ENCODE measurements at regions of chr1 and their contacts with region 1.

Region 1: DNA sequence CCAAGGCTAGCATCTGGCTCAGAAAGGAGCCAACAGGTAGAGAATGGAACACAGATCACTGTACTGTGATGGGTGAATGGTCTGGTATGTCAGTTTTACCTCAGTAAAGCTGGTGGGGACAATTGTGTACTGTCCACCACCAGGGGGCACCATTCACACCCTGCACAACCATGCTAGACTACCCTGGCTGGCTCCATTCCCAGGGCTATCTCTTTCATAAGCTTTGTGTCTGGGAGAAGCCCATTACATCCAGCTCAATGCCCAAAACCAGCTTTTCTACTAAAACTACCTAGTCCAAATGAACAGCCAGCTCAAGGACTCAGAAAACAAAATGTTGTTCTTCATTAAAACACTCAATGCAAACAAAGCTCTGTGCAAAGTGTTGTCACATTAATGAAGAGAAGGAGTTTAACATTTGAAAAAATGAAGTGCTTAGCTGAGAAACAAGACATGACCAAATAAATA is 62.0 kb upstream of the RASAL2 start:
- DNase-seq: no peak
- ATAC-seq: peak; percentile 100
- H3K4me3 ChIP-seq: no peak overlapping the region
- H3K27ac ChIP-seq: no peak overlapping the region
- H3K4me1 ChIP-seq: no peaks in the 10 kb centered on the region
- H3K27me3 ChIP-seq: no peaks in the 10 kb centered on the region; a peak in 1 of 4 replicates
- CTCF ChIP-seq: peak; percentile 74 to 82 (median 75)
- EP300 ChIP-seq: no peak
- POLR2A ChIP-seq: no peak
- RAD21 ChIP-seq: peak; percentile 72

Region 2: DNA sequence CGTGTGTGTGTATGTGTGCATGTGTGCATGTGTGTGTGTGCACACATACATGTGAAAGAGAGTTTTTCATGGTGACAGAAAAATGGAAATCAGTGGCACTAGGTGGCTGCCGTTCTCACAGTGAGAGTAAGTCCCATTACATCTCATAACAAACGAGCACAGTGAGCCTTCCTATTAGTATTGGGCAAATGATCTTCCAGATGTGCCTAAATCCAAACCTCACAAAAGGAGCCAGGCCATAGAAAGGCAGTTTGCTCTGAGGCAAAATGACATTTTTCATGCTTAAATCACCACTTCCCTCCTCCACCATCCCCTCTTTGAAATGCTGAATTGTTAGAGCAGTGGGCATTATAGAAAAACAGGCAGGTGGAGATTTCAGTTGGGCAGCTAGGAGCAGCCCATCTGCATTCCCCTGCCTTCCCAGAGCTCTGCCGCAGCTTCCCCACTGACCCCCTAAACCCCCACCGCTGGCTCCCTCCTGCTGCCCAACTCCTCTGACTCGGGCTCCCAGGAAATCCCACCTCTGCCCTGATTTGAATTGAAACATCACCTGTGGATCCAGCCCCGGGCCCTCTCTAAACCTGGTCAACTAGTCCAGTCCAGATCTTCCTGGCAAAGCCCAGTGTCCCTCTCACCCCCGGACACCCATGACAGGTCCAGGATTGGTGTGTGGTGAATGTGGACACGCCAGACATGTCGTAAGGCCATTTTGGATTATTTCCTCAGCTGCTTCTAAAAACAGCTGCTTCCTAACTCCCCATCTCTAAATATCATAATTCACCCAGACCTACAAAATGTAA is 252.5 kb before region 1 on chr1:
- CTCF ChIA-PET with region 1: no interaction called
- POLR2A ChIA-PET with region 1: no interaction called
- RAD21 ChIA-PET with region 1: no interaction called
- SMC1A ChIA-PET with region 1: no interaction called
- in situ Hi-C with region 1: no loop called
- intact Hi-C with region 1: no loop called
- DNase-seq: no peak
- ATAC-seq: no peak
- H3K4me3 ChIP-seq: no peak overlapping the region
- H3K27ac ChIP-seq: no peak overlapping the region
- H3K4me1 ChIP-seq: no peaks in the 10 kb centered on the region
- H3K27me3 ChIP-seq: no peaks in the 10 kb centered on the region
- CTCF ChIP-seq: no peak
- EP300 ChIP-seq: no peak
- POLR2A ChIP-seq: no peak
- RAD21 ChIP-seq: no peak

Region 3: DNA sequence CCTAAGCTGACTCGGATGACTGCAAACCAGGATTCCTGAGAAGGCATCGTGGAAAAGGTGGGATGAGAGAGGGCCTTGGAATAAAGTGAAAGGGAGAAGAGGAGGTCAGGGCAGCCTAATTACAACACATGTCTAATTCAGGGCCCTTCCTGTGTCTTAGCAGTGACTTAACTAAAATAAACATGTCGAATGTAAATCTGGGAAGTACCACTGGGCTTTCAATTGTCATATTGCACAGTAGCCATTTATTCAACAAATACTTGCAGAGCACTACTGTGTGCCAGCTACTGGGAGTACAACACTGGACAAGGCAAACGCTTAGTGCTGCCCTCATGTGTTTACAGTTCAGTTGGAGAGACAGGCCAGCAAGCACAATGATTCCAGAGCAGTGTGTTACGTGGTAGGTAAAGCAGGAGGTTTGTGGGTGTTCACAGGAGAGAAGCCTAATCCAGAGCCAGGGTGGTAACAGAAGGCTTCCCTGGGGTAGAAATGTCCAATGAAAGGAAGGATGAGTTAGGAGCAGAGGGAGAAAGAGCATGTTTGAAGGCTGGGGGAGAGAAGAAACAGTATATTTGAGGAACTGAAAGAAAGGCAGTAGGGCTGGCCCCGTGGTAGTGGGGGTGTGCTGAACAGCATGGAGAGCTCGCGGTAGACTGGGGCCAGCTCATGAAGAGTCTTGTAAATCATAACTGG is 24.0 kb after region 1 on chr1:
- CTCF ChIA-PET with region 1: interaction called, 13 read pairs
- POLR2A ChIA-PET with region 1: no interaction called
- RAD21 ChIA-PET with region 1: interaction called, 10 read pairs
- SMC1A ChIA-PET with region 1: interaction called, 9 read pairs
- in situ Hi-C with region 1: no loop called
- intact Hi-C with region 1: no loop called
- DNase-seq: peak; percentile 32
- ATAC-seq: peak; percentile 97
- H3K4me3 ChIP-seq: no peak overlapping the region; the same call in 1 of the 2 replicates
- H3K27ac ChIP-seq: 0 out of 2 replicates have a peak overlapping the region, but pooled peaks have one; percentile 38
- H3K4me1 ChIP-seq: peaks cover 9% of the 10 kb centered on the region
- H3K27me3 ChIP-seq: no peaks in the 10 kb centered on the region; a peak in 1 of 4 replicates
- CTCF ChIP-seq: peak; percentile 23 to 27 (median 25); a peak in 3 of 6 replicates
- EP300 ChIP-seq: peak in 1 of 2 experiments; percentile 78; a peak in 1 of 4 replicates
- POLR2A ChIP-seq: no peak
- RAD21 ChIP-seq: no peak

Region 4: GRCh38 chr1:178189814-178190213 is 157.9 kb after region 1 on chr1:
- CTCF ChIA-PET with region 1: interaction called, 130 read pairs
- POLR2A ChIA-PET with region 1: no interaction called
- RAD21 ChIA-PET with region 1: interaction called, 38 read pairs
- SMC1A ChIA-PET with region 1: interaction called, 45 read pairs
- in situ Hi-C with region 1: loop called (anchors 25 kb)
- intact Hi-C with region 1: loop called (anchors 1 kb)
- DNase-seq: peak; percentile 5
- ATAC-seq: peak; percentile 88
- H3K4me3 ChIP-seq: no peak overlapping the region
- H3K27ac ChIP-seq: no peak overlapping the region
- H3K4me1 ChIP-seq: no peaks in the 10 kb centered on the region
- H3K27me3 ChIP-seq: no peaks in the 10 kb centered on the region
- CTCF ChIP-seq: peak; percentile 69 to 82 (median 79)
- EP300 ChIP-seq: no peak
- POLR2A ChIP-seq: no peak
- RAD21 ChIP-seq: peak; percentile 81

Region 5: GRCh38 chr1:178282949-178283367 is 251.1 kb after region 1 on chr1:
- CTCF ChIA-PET with region 1: interaction called, 7 read pairs
- POLR2A ChIA-PET with region 1: no interaction called
- RAD21 ChIA-PET with region 1: no interaction called
- SMC1A ChIA-PET with region 1: interaction called, 14 read pairs
- in situ Hi-C with region 1: no loop called
- intact Hi-C with region 1: loop called (anchors 5 kb)
- DNase-seq: no peak
- ATAC-seq: peak; percentile 66
- H3K4me3 ChIP-seq: no peak overlapping the region
- H3K27ac ChIP-seq: no peak overlapping the region
- H3K4me1 ChIP-seq: no peaks in the 10 kb centered on the region
- H3K27me3 ChIP-seq: no peaks in the 10 kb centered on the region
- CTCF ChIP-seq: no peak; a peak in 1 of 6 replicates
- EP300 ChIP-seq: no peak
- POLR2A ChIP-seq: no peak
- RAD21 ChIP-seq: peak; percentile 37